ENCODE measurements at regions of chr17 and their contacts with region 1.

Region 1: DNA sequence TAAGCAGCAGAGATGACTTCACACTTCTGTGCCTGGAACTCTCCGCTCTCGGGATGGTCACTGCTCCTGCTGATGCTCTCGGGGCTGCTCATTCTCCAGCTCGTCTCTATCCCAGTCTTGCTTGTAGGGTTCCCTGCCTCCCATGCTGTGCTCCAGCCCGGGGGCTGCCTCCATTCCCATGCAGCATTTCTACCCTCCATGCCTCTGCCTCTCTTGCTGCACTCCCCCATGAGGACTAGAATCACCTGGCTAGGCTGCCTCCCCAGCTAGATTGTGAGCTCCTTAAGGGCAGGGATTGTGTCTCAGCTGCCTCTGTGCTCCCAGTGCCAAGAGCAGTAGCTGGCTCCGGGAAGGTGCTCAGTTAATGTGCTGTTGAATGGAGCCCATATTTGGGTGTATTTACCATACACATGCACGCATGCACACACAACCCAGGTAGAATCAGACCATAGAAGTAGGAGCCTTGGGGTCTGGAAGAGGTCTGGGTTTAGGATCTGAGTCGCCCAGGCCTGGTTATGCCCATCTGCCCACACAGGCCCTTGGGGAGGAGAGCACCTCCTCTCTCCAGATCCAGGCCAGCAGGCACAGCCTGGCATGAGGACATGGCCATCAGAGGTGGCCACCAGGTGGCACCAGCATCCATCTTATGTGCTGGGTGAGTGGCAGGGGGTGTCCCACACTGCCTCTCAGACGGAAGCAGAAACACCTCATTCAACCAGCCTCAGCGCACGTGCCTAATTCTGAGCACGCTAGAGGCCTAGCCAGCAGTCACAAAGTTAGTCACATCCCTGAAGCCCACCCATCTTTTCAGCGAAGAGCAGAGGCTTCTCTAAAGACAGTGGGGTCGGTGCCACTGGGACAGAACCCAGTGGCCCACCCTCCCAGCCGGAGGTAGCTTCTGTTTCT is 9.3 kb downstream of the GIT1 start:
- DNase-seq: no peak
- H3K4me3 ChIP-seq: no peak overlapping the region
- H3K27ac ChIP-seq: peak overlapping the region; percentile 28
- H3K4me1 ChIP-seq: peaks cover 61% of the 10 kb centered on the region
- H3K27me3 ChIP-seq: no peaks in the 10 kb centered on the region
- CTCF ChIP-seq: peak; percentile 78 to 92 (median 89)
- POLR2A ChIP-seq: no peak

Region 2: DNA sequence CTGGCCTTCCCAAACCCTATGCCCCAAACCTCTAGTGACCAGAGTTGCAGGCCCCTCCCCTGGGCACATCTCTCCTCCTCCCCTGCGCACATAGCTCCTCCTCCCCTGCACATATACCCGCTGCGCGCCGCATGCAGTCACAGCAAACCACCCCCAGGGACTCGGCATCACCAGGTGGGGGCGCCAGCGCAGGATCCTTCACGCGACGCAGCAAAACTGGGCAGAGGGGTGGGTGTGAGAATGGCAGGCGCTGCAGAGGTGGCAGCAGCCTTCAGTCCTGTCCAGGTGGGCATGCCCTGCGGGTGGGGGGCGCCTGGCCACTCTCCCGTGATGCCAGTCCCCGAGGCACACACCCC is 37.0 kb after region 1 on chr17:
- intact Hi-C with region 1: loop called (anchors 5 kb)
- DNase-seq: peak in 1 of 2 donors; percentile 85
- H3K4me3 ChIP-seq: peak overlapping the region; percentile 39 to 43
- H3K27ac ChIP-seq: peak overlapping the region; percentile 52
- H3K4me1 ChIP-seq: peaks cover 63% of the 10 kb centered on the region
- H3K27me3 ChIP-seq: no peaks in the 10 kb centered on the region
- CTCF ChIP-seq: peak in 2 of 3 experiments; percentile 62 to 66
- POLR2A ChIP-seq: no peak

Region 3: DNA sequence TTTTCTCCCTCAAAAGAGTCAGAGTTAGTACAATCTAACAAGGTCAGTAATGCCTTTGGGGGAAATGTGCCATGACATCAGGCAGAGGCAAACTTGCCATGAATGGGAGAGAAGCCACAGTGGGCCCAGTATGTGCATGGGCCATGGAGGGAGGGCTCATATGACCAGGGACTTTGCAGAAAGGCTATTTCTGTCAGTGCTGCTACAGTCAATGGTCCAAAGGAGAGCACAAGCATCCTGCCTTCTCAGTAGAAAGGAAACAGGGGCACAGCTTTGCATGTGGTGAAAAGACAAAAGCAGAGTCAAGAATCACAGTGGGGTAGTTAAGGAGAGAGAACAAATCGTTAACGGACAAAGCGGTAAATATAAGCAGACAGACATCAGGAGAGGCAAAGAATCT is 53.8 kb after region 1 on chr17:
- intact Hi-C with region 1: no loop called
- DNase-seq: no peak
- H3K4me3 ChIP-seq: no peak overlapping the region
- H3K27ac ChIP-seq: no peak overlapping the region
- H3K4me1 ChIP-seq: peaks cover 2% of the 10 kb centered on the region
- H3K27me3 ChIP-seq: no peaks in the 10 kb centered on the region
- CTCF ChIP-seq: no peak
- POLR2A ChIP-seq: no peak

Region 4: DNA sequence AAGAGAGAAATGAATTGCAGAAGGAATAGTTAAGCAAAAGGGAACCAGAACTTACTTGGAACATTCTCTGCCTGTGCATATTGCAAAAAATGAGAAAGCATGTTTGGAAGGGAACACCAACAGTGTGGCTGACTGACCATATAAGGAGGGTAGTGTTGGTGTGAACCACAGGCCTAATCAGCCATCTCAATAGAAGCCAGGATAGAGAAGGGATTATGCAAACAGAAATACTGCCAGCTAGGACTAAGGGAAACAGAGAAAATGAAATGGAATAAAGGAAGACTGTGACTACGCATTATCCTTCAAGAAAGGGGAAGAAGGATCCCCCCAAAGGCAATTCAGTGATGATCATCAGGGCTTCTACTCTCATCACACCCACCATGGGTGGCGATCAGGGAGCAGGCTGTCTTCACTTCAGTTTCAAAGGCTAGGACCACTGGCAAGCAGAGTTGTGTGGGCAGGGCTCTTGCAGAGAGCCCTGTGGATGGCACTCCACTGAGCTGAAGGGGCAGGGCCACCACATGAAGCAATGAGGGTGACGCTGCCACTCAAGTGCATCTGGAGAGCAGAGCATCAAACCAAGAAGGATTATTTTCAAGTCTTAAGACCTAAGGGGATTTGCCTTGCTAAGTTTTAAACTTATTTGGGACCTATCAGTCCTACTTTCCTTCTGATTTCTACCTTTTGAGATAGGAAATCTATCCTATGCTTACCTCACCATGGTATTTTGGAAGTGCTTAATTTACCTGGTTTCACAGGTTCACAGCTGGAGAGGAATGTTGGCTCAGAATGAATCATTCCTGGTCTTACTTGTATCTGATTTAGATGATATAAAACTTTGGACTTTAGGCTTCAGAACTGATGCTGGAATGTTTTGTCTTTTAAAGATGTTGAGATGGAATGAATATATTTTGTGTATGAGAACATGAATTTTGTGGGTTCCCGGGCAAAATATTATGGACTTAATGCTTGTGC is 209.4 kb after region 1 on chr17:
- intact Hi-C with region 1: loop called (anchors 5 kb)
- DNase-seq: no peak
- H3K4me3 ChIP-seq: no peak overlapping the region
- H3K27ac ChIP-seq: no peak overlapping the region
- H3K4me1 ChIP-seq: no peaks in the 10 kb centered on the region
- H3K27me3 ChIP-seq: no peaks in the 10 kb centered on the region
- CTCF ChIP-seq: no peak
- POLR2A ChIP-seq: no peak

Region 5: GRCh38 chr17:29931231-29931932 is 351.3 kb after region 1 on chr17:
- intact Hi-C with region 1: loop called (anchors 10 kb)
- DNase-seq: no peak
- H3K4me3 ChIP-seq: peak overlapping the region; percentile 72 to 79
- H3K27ac ChIP-seq: no peak overlapping the region
- H3K4me1 ChIP-seq: peaks cover 23% of the 10 kb centered on the region
- H3K27me3 ChIP-seq: no peaks in the 10 kb centered on the region
- CTCF ChIP-seq: peak; percentile 77 to 94 (median 85)
- POLR2A ChIP-seq: no peak